ENCODE measurements at regions of chr12 and their contacts with region 1.

Region 1: GRCh38 chr12:47767216-47767724 is 5.8 kb upstream of the SLC48A1 start:
- DNase-seq: no peak
- ATAC-seq: no peak
- H3K4me3 ChIP-seq: no peak overlapping the region
- H3K27ac ChIP-seq: no peak overlapping the region
- H3K4me1 ChIP-seq: no peaks in the 10 kb centered on the region
- H3K27me3 ChIP-seq: no peaks in the 10 kb centered on the region

Region 2: DNA sequence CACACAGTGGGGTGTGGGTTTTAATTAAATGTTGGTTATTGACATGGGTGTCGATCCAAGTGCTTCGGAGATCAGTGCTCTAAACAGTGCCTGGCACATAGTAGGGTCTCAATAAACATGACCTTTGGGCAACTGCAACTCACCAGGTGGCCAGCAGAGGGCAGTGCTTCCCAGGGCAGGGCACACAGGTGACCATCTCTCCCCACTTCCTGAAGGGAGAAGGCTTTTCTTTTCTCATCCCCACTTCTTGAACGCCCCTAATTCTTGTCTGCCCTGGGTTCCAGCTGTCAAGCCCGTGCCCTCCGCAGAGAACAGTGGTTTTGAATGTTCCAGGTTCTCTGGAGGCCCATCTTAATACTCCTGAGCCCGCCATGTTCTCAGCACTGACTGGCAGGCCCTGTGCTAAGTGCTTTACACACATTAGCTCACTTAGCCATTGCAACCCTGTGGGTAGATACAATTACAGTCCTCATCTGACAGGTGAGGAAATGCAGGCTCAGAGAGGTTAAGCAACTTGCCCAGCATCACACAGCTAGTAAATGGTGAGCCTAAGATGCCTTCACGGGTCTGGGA is 24.9 kb before region 1 on chr12:
- intact Hi-C with region 1: loop called (anchors 2 kb)
- DNase-seq: peak in 1 of 2 donors; percentile 90
- ATAC-seq: no peak
- H3K4me3 ChIP-seq: no peak overlapping the region
- H3K27ac ChIP-seq: no peak overlapping the region
- H3K4me1 ChIP-seq: no peaks in the 10 kb centered on the region
- H3K27me3 ChIP-seq: no peaks in the 10 kb centered on the region

Region 3: GRCh38 chr12:47882781-47883546 is 115.7 kb after region 1 on chr12:
- intact Hi-C with region 1: no loop called
- DNase-seq: peak in 1 of 2 donors; percentile 66
- ATAC-seq: peak; percentile 24
- H3K4me3 ChIP-seq: no peak overlapping the region
- H3K27ac ChIP-seq: no peak overlapping the region
- H3K4me1 ChIP-seq: no peaks in the 10 kb centered on the region
- H3K27me3 ChIP-seq: no peaks in the 10 kb centered on the region